GM12878 (cell line): ENCODE measurements at regions of chr18 and their contacts with region 1.

Region 1: GRCh38 chr18:42183746-42184145 is 228.7 kb downstream of the PIK3C3 start:
- DNase-seq: no peak
- ATAC-seq: no peak
- H3K4me3 ChIP-seq: no peak overlapping the region
- H3K27ac ChIP-seq: no peak overlapping the region
- H3K4me1 ChIP-seq: no peaks in the 10 kb centered on the region
- H3K27me3 ChIP-seq: no peaks in the 10 kb centered on the region
- CTCF ChIP-seq: no peak
- EP300 ChIP-seq: no peak
- POLR2A ChIP-seq: no peak
- RAD21 ChIP-seq: no peak

Region 2: DNA sequence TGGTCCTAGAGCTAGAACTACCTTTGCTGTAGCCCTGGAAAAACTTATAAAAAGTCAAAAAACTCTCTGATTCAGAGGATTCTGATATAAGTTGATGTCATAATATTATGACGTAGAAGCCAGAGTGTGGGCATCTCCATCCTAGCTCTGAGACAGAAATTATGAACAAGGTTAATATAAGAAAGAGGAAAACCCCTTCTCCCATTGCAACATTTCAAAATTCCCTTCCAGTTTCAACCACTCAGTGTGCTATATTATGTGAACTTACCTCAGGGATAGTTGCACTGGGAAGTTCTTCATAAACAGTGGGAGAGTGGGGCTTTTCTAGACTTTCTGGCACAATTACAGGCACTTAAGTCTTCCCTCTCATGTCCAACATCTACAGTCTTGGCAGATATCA is 57.2 kb before region 1 on chr18:
- CTCF ChIA-PET with region 1: interaction called, 3 read pairs
- POLR2A ChIA-PET with region 1: interaction called, 3 read pairs
- RAD21 ChIA-PET with region 1: interaction called, 10 read pairs
- SMC1A ChIA-PET with region 1: interaction called, 7 read pairs
- in situ Hi-C with region 1: no loop called
- intact Hi-C with region 1: no loop called
- DNase-seq: no peak
- ATAC-seq: no peak
- H3K4me3 ChIP-seq: no peak overlapping the region
- H3K27ac ChIP-seq: no peak overlapping the region
- H3K4me1 ChIP-seq: no peaks in the 10 kb centered on the region
- H3K27me3 ChIP-seq: no peaks in the 10 kb centered on the region
- CTCF ChIP-seq: no peak
- EP300 ChIP-seq: no peak
- POLR2A ChIP-seq: no peak
- RAD21 ChIP-seq: no peak

Region 3: DNA sequence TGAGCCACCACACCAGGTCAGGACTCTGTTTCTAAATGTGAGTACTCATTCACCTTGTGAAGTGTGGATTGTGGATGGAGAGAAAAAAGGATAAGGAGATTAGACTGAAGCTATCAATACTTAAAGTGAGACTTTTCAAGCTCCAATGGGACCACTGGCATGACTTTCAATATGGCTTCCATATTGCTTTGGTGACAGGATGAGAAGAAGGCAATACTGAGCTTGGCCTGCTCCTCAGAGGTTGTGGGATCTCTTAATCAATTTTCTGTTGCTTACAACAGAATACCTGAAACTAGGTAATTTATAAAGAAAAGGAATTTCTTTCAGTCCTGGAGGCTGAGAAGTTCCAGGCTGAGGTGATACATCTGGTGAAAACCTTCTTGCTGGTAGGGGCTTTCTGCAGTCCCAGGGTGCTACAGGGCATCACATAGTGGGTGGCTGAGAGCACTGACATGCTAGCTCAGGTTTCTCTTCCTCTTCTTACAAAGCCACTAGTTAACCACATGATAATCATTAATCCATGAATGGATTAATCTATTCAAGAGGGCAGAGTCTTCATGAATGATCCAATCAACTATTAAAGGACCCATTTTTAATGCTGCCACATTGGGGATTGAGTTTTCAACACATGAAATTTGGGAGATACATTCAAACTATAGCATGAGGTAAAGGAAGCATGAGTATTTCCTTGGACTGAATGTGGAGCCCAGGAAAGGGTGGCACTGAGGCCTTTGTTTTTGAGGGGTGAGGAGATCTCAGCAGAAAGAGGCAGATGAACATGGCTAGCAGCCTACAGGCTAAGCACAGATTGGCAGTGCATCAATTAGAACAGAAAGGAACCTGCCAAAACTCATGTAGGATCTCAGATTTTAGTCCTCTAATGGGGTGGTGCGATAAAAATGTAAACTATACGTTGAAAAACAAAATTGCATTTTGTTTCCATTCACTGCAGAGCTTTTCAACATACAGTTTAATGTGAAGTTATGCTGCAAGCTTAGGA is 45.8 kb after region 1 on chr18:
- CTCF ChIA-PET with region 1: interaction called, 17 read pairs
- POLR2A ChIA-PET with region 1: interaction called, 26 read pairs
- RAD21 ChIA-PET with region 1: interaction called, 95 read pairs
- SMC1A ChIA-PET with region 1: interaction called, 72 read pairs
- in situ Hi-C with region 1: no loop called
- intact Hi-C with region 1: no loop called
- DNase-seq: peak; percentile 63
- ATAC-seq: peak; percentile 98
- H3K4me3 ChIP-seq: no peak overlapping the region
- H3K27ac ChIP-seq: no peak overlapping the region
- H3K4me1 ChIP-seq: no peaks in the 10 kb centered on the region
- H3K27me3 ChIP-seq: no peaks in the 10 kb centered on the region
- CTCF ChIP-seq: no peak
- EP300 ChIP-seq: peak; percentile 76 to 86; a peak in 3 of 4 replicates
- POLR2A ChIP-seq: no peak
- RAD21 ChIP-seq: no peak

Region 4: DNA sequence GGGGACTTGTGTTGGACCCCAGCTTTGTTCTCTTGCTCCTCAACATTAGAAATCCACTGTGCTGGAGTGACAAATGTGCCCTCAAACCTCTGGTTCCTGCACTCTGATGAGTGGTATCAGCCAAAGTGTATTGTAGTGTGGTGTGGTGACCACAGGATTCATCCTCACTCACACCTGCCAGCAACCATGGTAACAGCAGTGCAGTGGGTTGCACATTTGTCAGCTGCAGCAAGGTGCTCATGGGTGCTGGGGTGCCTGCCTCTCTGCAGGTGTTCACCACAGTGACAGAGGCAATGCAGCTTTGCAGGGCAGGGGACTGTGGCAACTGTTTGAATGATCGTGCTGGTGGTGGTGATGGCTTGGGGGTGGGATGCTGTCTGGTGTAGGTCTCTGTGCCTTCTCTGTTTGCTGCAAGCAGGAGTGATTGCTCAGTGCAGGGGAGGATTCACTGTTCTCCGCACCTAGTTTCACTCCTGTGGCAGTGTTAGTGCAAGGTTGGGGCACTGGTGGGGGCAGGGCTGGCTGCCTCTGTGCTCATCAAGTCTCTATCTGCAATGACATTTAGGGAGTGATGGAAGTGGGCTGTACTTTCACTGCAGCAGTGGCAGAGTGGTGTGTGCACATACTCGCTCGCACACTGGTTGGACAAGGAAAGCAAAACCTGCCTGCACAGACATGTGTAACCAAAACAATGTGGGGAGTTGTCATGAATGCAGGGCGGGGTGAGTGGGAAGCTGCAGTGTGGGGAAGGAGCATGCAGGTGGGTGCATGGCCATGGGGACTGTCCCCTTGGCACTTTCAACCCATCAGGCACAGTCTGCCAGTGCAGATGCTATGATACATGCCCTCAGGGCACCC is 72.4 kb after region 1 on chr18:
- CTCF ChIA-PET with region 1: interaction called, 5 read pairs
- POLR2A ChIA-PET with region 1: no interaction called
- RAD21 ChIA-PET with region 1: interaction called, 4 read pairs
- SMC1A ChIA-PET with region 1: interaction called, 12 read pairs
- in situ Hi-C with region 1: no loop called
- intact Hi-C with region 1: no loop called
- DNase-seq: no peak
- ATAC-seq: peak; percentile 66
- H3K4me3 ChIP-seq: no peak overlapping the region
- H3K27ac ChIP-seq: no peak overlapping the region
- H3K4me1 ChIP-seq: no peaks in the 10 kb centered on the region
- H3K27me3 ChIP-seq: no peaks in the 10 kb centered on the region; a peak in 1 of 4 replicates
- CTCF ChIP-seq: no peak
- EP300 ChIP-seq: no peak
- POLR2A ChIP-seq: no peak
- RAD21 ChIP-seq: no peak

Region 5: DNA sequence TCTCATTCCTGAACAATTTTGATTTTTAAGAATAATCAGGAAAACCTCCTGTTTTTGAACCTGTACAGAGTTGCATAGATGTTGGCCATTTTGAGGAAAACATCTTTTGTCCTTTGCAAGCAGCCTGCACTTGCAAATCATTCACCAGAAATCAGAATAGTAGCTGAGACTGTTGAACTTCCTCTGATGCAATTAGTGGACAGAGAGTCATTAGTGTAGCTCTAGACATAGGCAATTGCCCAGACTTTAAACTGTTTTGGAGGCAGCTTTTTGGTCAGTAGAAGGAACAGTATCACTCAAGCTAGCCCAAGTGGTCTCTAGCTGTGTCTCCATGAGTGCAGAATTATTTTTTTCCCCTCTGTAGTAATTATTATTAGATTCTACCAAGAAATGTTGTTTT is 97.4 kb after region 1 on chr18:
- CTCF ChIA-PET with region 1: interaction called, 8 read pairs
- POLR2A ChIA-PET with region 1: no interaction called
- RAD21 ChIA-PET with region 1: interaction called, 12 read pairs
- SMC1A ChIA-PET with region 1: interaction called, 16 read pairs
- in situ Hi-C with region 1: no loop called
- intact Hi-C with region 1: no loop called
- DNase-seq: no peak
- ATAC-seq: peak; percentile 68
- H3K4me3 ChIP-seq: no peak overlapping the region
- H3K27ac ChIP-seq: no peak overlapping the region
- H3K4me1 ChIP-seq: no peaks in the 10 kb centered on the region
- H3K27me3 ChIP-seq: no peaks in the 10 kb centered on the region
- CTCF ChIP-seq: no peak
- EP300 ChIP-seq: no peak
- POLR2A ChIP-seq: no peak
- RAD21 ChIP-seq: no peak

Region 6: GRCh38 chr18:43181711-43182110 is 998.0 kb after region 1 on chr18:
- CTCF ChIA-PET with region 1: no interaction called
- POLR2A ChIA-PET with region 1: no interaction called
- RAD21 ChIA-PET with region 1: no interaction called
- SMC1A ChIA-PET with region 1: no interaction called
- in situ Hi-C with region 1: no loop called
- intact Hi-C with region 1: no loop called
- DNase-seq: no peak
- ATAC-seq: no peak
- H3K4me3 ChIP-seq: no peak overlapping the region
- H3K27ac ChIP-seq: no peak overlapping the region
- H3K4me1 ChIP-seq: no peaks in the 10 kb centered on the region
- H3K27me3 ChIP-seq: no peaks in the 10 kb centered on the region
- CTCF ChIP-seq: no peak
- EP300 ChIP-seq: no peak
- POLR2A ChIP-seq: no peak
- RAD21 ChIP-seq: no peak